ENCODE measurements at regions of chr2 and their contacts with region 1.

Region 1: GRCh38 chr2:232854082-232854481 is 16.0 kb upstream of the SNORC start:
- DNase-seq: no peak
- H3K4me3 ChIP-seq: no peak overlapping the region
- H3K27ac ChIP-seq: no peak overlapping the region
- H3K4me1 ChIP-seq: peaks cover 13% of the 10 kb centered on the region
- H3K27me3 ChIP-seq: no peaks in the 10 kb centered on the region
- CTCF ChIP-seq: no peak

Region 2: GRCh38 chr2:233251306-233252116 is 397.4 kb after region 1 on chr2 and contains the start of gene ATG16L1:
- intact Hi-C with region 1: loop called (anchors 5 kb)
- DNase-seq: peak; percentile 96
- H3K4me3 ChIP-seq: peak within 1 kb of the TSS; percentile 99
- H3K27ac ChIP-seq: peak within 1 kb of the TSS; percentile 91
- H3K4me1 ChIP-seq: peaks cover 34% of the 10 kb centered on the region
- H3K27me3 ChIP-seq: no peaks in the 10 kb centered on the region
- CTCF ChIP-seq: peak; percentile 96
- total RNA-seq, gene ATG16L1: 18.6 TPM

Measured in left ventricle myocardium inferior (tissue), 1 donor.